HEK293 (cell line): ENCODE measurements at regions of chr9 and their contacts with region 1.

Region 1: GRCh38 chr9:128218518-128219389 is 15.6 kb downstream of the DNM1 start:
- H3K4me3 ChIP-seq: no peak overlapping the region
- H3K27ac ChIP-seq: no peak overlapping the region
- H3K4me1 ChIP-seq: no peaks in the 10 kb centered on the region
- CTCF ChIP-seq: no peak

Region 2: DNA sequence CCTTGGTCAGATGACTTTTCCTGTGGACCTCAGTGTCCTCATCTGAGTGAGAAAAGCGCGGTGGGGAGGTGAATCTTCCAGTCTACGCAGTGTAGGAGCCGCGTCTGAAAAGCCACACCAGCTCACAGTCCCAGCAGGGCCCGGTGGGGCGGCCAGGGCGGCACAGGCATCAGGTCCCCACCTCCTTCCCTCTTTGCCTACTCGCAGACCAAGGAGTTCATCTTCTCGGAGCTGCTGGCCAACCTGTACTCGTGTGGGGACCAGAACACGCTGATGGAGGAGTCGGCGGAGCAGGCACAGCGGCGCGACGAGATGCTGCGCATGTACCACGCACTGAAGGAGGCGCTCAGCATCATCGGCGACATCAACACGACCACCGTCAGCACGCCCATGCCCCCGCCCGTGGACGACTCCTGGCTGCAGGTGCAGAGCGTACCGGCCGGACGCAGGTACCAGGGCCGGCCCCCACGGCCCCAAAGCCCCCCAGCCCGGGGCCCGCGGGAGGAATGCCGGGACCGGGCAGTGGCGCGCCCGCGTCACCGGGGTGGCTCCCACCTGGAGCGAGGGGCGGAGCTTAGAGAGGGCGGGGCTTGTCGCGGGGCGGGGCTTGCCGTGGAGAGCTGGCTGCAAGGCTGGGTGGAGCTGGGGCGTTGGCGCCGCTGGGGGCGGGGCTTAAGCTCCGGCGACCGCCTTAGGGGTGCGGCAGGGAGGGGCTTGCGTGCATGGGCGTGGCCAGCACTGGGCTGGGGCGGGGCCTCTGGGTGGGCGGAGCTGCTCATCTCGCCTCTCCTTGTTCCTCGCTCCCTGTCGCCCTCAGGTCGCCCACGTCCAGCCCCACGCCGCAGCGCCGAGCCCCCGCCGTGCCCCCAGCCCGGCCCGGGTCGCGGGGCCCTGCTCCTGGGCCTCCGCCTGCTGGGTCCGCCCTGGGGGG is 31.4 kb after region 1 on chr9:
- CTCF ChIA-PET with region 1: interaction called, 6 read pairs
- POLR2A ChIA-PET with region 1: interaction called, 12 read pairs
- H3K4me3 ChIP-seq: peak overlapping the region; percentile 25
- H3K27ac ChIP-seq: no peak overlapping the region
- H3K4me1 ChIP-seq: no peaks in the 10 kb centered on the region
- CTCF ChIP-seq: no peak